Activated B cell treated with CpG ODN at 0.5 μM for 24 hours (primary cell): ENCODE measurements at regions of chr1 and their contacts with region 1.

Region 1: GRCh38 chr1:78004719-78005447 is at the start of gene DNAJB4:
- DNase-seq: no peak
- ATAC-seq: peak; percentile 94
- H3K4me3 Mint-ChIP-seq: peak within 1 kb of the TSS; percentile 92
- H3K27ac Mint-ChIP-seq: peak within 1 kb of the TSS; percentile 99
- H3K4me1 Mint-ChIP-seq: peaks cover 50% of the 10 kb centered on the region
- H3K27me3 Mint-ChIP-seq: peaks cover 2% of the 10 kb centered on the region
- CTCF ChIP-seq: no peak
- total RNA-seq, gene DNAJB4: 9.9 and 11.9 TPM in 2 replicates

Region 2: DNA sequence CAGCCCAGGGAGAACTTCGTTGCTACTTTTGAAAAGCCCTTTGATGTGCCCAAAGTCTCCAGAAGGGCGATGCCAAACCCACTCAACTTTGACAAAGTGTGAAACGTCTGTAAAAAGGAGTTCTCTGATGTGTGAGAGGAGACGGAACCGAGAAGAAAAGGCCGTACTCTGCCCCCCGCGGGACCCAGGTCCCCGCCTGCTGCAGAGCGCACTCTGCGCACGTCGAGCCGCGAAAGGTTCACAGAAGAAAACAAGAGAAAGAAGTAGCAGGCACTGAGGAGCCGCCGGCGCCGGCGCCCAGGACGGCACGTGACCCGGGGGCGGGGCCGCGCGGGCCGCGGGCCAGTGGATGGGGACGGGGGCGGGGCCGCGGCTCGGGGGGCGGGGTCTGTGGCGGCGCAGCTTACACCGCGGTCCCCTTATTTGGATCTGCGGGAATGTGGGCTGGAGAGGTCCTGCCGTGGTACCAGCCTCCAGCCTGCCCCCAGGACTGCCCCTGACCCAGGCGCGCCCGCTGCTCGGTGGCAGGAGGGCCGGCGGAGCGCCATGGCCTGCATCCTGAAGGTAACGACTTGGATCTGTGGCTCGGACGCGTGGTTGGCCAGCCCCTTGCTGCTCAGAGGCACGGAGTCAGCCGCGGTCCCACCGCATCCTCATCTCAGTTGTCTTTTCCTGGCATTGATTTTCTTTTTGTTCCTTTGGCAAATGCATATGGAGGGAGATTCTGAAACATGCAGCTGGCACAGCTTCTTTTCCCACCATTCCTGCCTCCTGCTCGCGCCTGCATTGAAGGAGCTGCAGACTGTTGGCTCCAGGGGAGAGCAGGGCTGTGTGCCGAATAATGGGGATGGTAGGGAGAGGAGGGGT is 1930.3 kb before region 1 on chr1 and contains the start of gene ST6GALNAC3:
- CTCF ChIA-PET with region 1: no interaction called
- POLR2A ChIA-PET with region 1: interaction called, 5 read pairs
- intact Hi-C with region 1: loop called (anchors 10 kb)
- DNase-seq: peak; percentile 72
- ATAC-seq: peak; percentile 86
- H3K4me3 Mint-ChIP-seq: peak within 1 kb of the TSS; percentile 88
- H3K27ac Mint-ChIP-seq: peak within 1 kb of the TSS; percentile 81
- H3K4me1 Mint-ChIP-seq: peaks cover 35% of the 10 kb centered on the region
- H3K27me3 Mint-ChIP-seq: peaks cover 9% of the 10 kb centered on the region
- CTCF ChIP-seq: no peak
- total RNA-seq, gene ST6GALNAC3: 9.1 and 12.6 TPM in 2 replicates

Region 3: GRCh38 chr1:77759071-77760028 is 245.5 kb before region 1 on chr1 and contains the start of gene USP33:
- CTCF ChIA-PET with region 1: no interaction called
- POLR2A ChIA-PET with region 1: interaction called, 3 read pairs
- intact Hi-C with region 1: loop called (anchors 1 kb)
- DNase-seq: peak; percentile 95
- ATAC-seq: peak; percentile 97
- H3K4me3 Mint-ChIP-seq: peak within 1 kb of the TSS; percentile 93
- H3K27ac Mint-ChIP-seq: peak within 1 kb of the TSS; percentile 87
- H3K4me1 Mint-ChIP-seq: peaks cover 32% of the 10 kb centered on the region
- H3K27me3 Mint-ChIP-seq: peaks cover 2% of the 10 kb centered on the region
- CTCF ChIP-seq: no peak
- total RNA-seq, gene USP33: 42.1 and 58.4 TPM in 2 replicates

Region 4: DNA sequence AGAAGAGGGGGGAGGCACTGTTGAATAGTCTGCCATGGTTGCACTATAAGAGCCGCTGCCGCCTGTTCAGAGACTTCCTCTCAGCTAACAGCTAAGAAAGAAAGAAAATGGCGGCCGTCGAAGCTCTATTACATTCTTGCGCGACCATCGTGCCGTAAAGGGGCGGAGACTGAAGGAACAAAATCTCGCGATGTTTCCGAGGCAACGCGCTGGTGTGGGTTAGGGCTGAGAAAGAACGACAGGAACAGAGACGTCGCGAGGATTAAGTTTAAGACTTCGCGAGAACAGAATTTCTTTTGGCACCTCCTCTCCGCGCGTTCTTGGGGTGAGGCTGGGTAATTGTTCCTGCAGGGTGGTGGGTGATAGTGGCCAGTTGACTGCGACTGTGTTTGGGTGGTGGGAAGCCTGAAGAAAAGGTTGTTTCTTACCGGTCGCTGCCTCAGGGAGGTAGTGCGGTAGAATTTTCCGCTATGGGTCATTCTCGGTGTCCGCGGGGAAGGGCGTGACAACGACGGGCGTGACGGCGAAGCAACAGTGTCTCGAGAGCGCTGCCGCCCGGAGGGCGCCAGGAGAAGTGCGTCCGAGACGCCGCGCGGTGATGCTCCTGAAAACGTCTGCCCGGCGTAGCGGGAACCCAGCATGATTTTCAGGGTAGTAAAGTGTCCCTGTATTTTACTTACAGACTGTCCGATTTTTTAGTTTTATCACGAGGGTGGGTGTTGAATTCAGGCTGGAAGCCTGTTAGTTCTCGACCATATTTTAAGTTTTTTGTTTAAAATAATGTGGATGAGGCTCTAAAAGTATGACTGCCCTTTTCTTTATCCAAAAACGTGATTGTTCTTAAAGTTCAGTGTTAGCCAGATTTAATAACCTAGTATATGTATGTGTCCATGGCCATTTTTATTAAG is 25.7 kb before region 1 on chr1 and contains the start of gene FUBP1:
- CTCF ChIA-PET with region 1: interaction called, 11 read pairs
- POLR2A ChIA-PET with region 1: interaction called, 355 read pairs
- intact Hi-C with region 1: loop called (anchors 1 kb)
- DNase-seq: peak; percentile 81
- ATAC-seq: peak; percentile 74
- H3K4me3 Mint-ChIP-seq: no peak within 1 kb of the TSS
- H3K27ac Mint-ChIP-seq: no peak within 1 kb of the TSS
- H3K4me1 Mint-ChIP-seq: peaks cover 31% of the 10 kb centered on the region
- H3K27me3 Mint-ChIP-seq: no peaks in the 10 kb centered on the region
- CTCF ChIP-seq: no peak
- total RNA-seq, gene FUBP1: 259 and 282 TPM in 2 replicates

Region 5: GRCh38 chr1:78114034-78114956 is 109.4 kb after region 1 on chr1:
- CTCF ChIA-PET with region 1: interaction called, 5 read pairs
- POLR2A ChIA-PET with region 1: no interaction called
- intact Hi-C with region 1: loop called (anchors 2 kb)
- DNase-seq: no peak
- ATAC-seq: peak; percentile 75
- H3K4me3 Mint-ChIP-seq: no peak overlapping the region
- H3K27ac Mint-ChIP-seq: no peak overlapping the region
- H3K4me1 Mint-ChIP-seq: no peaks in the 10 kb centered on the region
- H3K27me3 Mint-ChIP-seq: peaks cover 1% of the 10 kb centered on the region
- CTCF ChIP-seq: peak; percentile 66